ENCODE measurements at regions of chr17 and their contacts with region 1.

Region 1: GRCh38 chr17:31216053-31216751 is 80.8 kb downstream of the OMG start:
- DNase-seq: peak in 2 of 4 experiments; percentile 17 to 41
- ATAC-seq: 0 out of 3 replicates have a peak, but pooled peaks have one; percentile 33
- H3K4me3 ChIP-seq: no peak overlapping the region
- H3K27ac ChIP-seq: no peak overlapping the region
- H3K4me1 ChIP-seq: no peaks in the 10 kb centered on the region
- H3K27me3 ChIP-seq: no peaks in the 10 kb centered on the region
- CTCF ChIP-seq: peak; percentile 15 to 67 (median 42); a peak in 4 of 6 replicates
- EP300 ChIP-seq: no peak
- POLR2A ChIP-seq: no peak
- RAD21 ChIP-seq: peak; percentile 64 to 83

Region 2: DNA sequence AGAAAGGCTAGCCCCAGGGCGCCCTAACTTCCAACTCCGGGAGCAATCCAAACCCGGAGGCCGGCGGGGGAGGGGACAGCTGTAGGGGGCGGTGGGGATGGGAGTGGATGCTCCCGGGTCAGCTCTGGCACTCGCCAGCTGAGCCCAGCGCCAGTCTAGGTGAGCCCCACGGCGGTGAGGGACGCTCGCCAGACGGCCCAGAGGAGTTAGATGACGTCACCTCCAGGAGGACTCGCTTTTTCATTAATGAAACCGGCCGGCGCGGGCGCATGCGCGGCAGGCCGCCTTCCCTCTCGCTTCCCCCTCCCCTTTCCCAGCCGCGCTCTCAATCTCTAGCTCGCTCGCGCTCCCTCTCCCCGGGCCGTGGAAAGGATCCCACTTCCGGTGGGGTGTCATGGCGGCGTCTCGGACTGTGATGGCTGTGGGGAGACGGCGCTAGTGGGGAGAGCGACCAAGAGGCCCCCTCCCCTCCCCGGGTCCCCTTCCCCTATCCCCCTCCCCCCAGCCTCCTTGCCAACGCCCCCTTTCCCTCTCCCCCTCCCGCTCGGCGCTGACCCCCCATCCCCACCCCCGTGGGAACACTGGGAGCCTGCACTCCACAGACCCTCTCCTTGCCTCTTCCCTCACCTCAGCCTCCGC is 121.5 kb before region 1 on chr17 and contains the start of gene NF1:
- CTCF ChIA-PET with region 1: no interaction called
- POLR2A ChIA-PET with region 1: no interaction called
- in situ Hi-C with region 1: no loop called
- intact Hi-C with region 1: loop called (anchors 5 kb)
- DNase-seq: peak; percentile 96 to 98 (median 98)
- ATAC-seq: peak; percentile 95
- H3K4me3 ChIP-seq: peak within 1 kb of the TSS; percentile 99
- H3K27ac ChIP-seq: peak within 1 kb of the TSS; percentile 93
- H3K4me1 ChIP-seq: peaks cover 9 to 11% of the 10 kb centered on the region in 2 experiments; a peak in 4 of 5 replicates
- H3K27me3 ChIP-seq: no peaks in the 10 kb centered on the region
- CTCF ChIP-seq: peak in 1 of 3 experiments; percentile 21; a peak in 1 of 6 replicates
- EP300 ChIP-seq: peak; percentile 15; the same call in 1 of the 2 replicates
- POLR2A ChIP-seq: peak; percentile 73
- RAD21 ChIP-seq: no peak
- polyA plus RNA-seq, gene NF1: 3.4 to 7.5 TPM

Measured in K562 (cell line).